ENCODE measurements at regions of chr12 and their contacts with region 1.

Region 1: GRCh38 chr12:546921-547845 is 87.4 kb downstream of the B4GALNT3 start:
- DNase-seq: no peak
- ATAC-seq: peak; percentile 93
- H3K4me3 ChIP-seq: no peak overlapping the region
- H3K27ac ChIP-seq: no peak overlapping the region
- H3K4me1 ChIP-seq: no peaks in the 10 kb centered on the region
- H3K27me3 ChIP-seq: peaks cover 0 to 3% of the 10 kb centered on the region in 2 experiments; a peak in 3 of 4 replicates
- CTCF ChIP-seq: peak; percentile 96 to 99 (median 97)
- EP300 ChIP-seq: no peak
- POLR2A ChIP-seq: no peak
- RAD21 ChIP-seq: peak; percentile 95

Region 2: DNA sequence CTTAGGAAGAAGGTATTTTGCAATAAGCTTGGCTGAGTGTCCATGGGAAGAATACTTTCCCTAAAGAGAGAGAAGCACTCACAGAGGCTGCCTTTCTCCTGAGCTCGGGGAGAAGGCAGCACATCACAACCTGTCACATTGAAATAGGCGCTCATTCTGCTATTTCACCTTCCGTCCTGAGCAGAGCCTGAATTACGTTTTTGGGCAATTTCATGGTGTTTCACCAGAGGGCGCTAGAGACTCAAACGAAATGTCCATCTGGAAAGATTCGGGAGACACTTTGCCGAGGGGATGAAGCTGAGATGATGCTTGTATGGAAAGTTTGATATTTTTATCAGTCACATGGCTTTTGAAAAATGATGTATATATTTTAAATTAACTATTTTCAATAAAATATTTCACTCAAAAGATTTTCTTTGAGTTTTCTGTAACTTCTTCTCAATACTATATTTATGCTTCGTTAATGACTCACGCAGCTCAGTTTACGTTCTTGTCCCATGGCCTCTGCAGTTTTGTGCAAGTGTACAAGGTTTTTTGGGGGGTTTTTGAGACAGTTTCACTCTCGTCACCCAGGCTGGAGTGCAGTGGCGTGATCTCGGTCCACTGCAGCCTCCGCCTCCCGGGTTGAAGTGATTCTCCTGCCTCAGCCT is 104.8 kb before region 1 on chr12:
- CTCF ChIA-PET with region 1: interaction called, 28 read pairs
- POLR2A ChIA-PET with region 1: no interaction called
- RAD21 ChIA-PET with region 1: no interaction called
- SMC1A ChIA-PET with region 1: interaction called, 9 read pairs
- in situ Hi-C with region 1: no loop called
- intact Hi-C with region 1: no loop called
- DNase-seq: no peak
- ATAC-seq: no peak
- H3K4me3 ChIP-seq: no peak overlapping the region
- H3K27ac ChIP-seq: no peak overlapping the region
- H3K4me1 ChIP-seq: no peaks in the 10 kb centered on the region
- H3K27me3 ChIP-seq: no peaks in the 10 kb centered on the region
- CTCF ChIP-seq: peak; percentile 55 to 68 (median 68)
- EP300 ChIP-seq: no peak
- POLR2A ChIP-seq: no peak
- RAD21 ChIP-seq: peak; percentile 15; the same call in 1 of the 2 replicates

Region 3: GRCh38 chr12:452667-453210 is 94.4 kb before region 1 on chr12:
- CTCF ChIA-PET with region 1: interaction called, 55 read pairs
- POLR2A ChIA-PET with region 1: no interaction called
- RAD21 ChIA-PET with region 1: interaction called, 3 read pairs
- SMC1A ChIA-PET with region 1: interaction called, 6 read pairs
- in situ Hi-C with region 1: loop called (anchors 5 kb)
- intact Hi-C with region 1: loop called (anchors 2 kb)
- DNase-seq: no peak
- ATAC-seq: peak; percentile 92
- H3K4me3 ChIP-seq: no peak overlapping the region
- H3K27ac ChIP-seq: no peak overlapping the region
- H3K4me1 ChIP-seq: no peaks in the 10 kb centered on the region
- H3K27me3 ChIP-seq: peaks cover 0 to 4% of the 10 kb centered on the region in 2 experiments; a peak in 2 of 4 replicates
- CTCF ChIP-seq: peak in 2 of 3 experiments; percentile 44 to 65; a peak in 4 of 6 replicates
- EP300 ChIP-seq: no peak
- POLR2A ChIP-seq: no peak
- RAD21 ChIP-seq: no peak

Region 4: DNA sequence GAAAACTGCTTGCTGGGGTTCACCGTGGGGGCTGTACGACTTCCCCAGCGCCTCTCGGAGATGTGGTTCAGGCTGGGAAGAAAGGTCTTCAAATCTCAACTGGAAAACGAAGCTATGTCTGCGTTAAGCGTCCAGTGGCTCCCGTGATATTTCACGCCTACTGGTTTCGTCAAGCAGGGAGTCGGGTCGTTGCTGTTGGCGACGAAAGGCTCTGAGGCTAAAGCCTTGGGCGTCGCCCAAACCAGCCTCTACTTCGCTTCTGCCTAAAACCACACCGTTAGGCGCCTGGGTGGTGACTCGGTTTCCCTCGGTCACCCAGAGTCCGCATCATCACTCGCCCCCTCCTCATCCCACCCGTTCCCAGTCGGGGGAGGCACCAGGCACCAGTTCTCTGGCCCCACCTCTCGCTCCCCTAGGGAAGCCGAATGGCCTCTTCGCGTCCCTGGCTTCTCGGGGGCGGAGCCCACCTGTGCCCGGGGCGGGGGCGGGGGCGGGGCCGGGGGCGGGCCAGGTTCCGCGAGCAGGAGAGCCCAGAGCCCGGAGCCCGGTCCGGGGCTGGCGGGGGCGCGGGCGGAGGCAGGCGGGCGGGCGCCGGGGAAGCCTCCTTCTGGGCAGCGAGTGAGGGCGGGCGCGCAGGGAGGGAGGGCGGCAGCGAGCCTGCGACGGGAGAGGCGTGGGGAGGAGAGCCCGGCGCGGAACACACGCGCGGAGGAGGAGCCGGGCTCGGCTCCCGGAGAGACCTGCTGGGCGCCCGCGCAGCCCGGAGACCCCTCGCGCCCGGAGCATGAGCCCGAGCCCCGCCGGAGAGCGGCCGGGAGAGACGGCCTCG is 87.5 kb before region 1 on chr12 and contains the start of gene B4GALNT3:
- CTCF ChIA-PET with region 1: interaction called, 55 read pairs
- POLR2A ChIA-PET with region 1: no interaction called
- RAD21 ChIA-PET with region 1: interaction called, 3 read pairs
- SMC1A ChIA-PET with region 1: interaction called, 4 read pairs
- in situ Hi-C with region 1: loop called (anchors 5 kb)
- intact Hi-C with region 1: no loop called
- DNase-seq: no peak
- ATAC-seq: peak; percentile 47
- H3K4me3 ChIP-seq: peak within 1 kb of the TSS; percentile 60; the same call in 1 of the 2 replicates
- H3K27ac ChIP-seq: no peak within 1 kb of the TSS
- H3K4me1 ChIP-seq: no peaks in the 10 kb centered on the region
- H3K27me3 ChIP-seq: peaks cover 0 to 16% of the 10 kb centered on the region in 2 experiments
- CTCF ChIP-seq: no peak
- EP300 ChIP-seq: no peak
- POLR2A ChIP-seq: no peak
- RAD21 ChIP-seq: no peak
- polyA plus RNA-seq, gene B4GALNT3: 0.05 to 0.26 TPM

Measured in GM12878 (cell line).